Cardiac septum (tissue), 1 donor: ENCODE measurements at regions of chr9 and their contacts with region 1.

Region 1: DNA sequence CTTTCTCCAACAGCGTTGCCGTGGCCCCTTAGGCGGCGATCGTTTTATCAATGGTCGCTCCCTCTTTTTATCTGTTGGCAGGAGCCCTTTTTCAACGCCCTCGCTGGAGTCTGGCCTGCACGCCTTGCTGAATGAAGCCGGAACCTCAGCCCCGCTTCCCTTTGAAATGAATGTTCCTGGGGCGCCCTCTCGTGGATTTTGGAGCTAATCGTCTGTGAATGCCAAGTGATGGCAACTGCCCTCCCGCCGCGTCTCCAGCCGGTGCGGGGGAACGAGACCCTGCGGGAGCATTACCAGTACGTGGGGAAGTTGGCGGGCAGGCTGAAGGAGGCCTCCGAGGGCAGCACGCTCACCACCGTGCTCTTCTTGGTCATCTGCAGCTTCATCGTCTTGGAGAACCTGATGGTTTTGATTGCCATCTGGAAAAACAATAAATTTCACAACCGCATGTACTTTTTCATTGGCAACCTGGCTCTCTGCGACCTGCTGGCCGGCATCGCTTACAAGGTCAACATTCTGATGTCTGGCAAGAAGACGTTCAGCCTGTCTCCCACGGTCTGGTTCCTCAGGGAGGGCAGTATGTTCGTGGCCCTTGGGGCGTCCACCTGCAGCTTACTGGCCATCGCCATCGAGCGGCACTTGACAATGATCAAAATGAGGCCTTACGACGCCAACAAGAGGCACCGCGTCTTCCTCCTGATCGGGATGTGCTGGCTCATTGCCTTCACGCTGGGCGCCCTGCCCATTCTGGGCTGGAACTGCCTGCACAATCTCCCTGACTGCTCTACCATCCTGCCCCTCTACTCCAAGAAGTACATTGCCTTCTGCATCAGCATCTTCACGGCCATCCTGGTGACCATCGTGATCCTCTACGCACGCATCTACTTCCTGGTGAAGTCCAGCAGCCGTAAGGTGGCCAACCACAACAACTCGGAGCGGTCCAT is 10.0 kb downstream of the S1PR3 start:
- DNase-seq: peak; percentile 93

Region 2: DNA sequence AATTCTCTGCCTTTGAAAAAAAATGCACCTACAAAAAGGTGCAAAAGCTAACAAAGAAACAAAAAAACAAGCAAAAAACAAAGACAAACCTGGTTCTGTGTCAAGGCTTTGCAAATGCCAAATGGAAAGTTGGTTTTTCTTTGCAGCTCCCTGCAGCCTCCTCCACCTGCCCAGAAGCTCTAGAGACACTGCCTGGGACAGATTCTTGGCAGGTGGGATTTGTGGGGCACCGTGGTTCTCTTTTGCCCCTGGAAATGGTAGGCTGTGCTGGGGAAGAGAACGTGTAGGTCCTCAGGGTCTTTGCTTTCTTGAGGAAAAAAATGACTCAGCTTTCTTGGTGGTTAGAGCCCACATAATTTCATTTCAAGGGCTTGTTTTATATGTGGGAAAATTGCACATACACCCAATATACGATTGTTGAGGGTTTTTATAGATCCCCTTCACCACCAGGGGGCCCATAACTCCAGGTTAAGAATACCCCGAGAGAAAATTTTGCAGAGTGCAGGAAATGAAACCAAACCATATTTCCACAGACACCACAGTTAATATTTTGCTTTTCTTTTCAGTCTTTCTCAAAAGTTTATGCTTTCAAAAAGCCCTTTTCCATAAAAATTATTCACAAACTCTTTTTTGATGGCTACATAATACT is 407.6 kb before region 1 on chr9:
- intact Hi-C with region 1: loop called (anchors 1 kb)
- DNase-seq: no peak

Region 3: GRCh38 chr9:88722753-88723152 is 278.5 kb before region 1 on chr9:
- intact Hi-C with region 1: loop called (anchors 5 kb)
- DNase-seq: no peak

Region 4: DNA sequence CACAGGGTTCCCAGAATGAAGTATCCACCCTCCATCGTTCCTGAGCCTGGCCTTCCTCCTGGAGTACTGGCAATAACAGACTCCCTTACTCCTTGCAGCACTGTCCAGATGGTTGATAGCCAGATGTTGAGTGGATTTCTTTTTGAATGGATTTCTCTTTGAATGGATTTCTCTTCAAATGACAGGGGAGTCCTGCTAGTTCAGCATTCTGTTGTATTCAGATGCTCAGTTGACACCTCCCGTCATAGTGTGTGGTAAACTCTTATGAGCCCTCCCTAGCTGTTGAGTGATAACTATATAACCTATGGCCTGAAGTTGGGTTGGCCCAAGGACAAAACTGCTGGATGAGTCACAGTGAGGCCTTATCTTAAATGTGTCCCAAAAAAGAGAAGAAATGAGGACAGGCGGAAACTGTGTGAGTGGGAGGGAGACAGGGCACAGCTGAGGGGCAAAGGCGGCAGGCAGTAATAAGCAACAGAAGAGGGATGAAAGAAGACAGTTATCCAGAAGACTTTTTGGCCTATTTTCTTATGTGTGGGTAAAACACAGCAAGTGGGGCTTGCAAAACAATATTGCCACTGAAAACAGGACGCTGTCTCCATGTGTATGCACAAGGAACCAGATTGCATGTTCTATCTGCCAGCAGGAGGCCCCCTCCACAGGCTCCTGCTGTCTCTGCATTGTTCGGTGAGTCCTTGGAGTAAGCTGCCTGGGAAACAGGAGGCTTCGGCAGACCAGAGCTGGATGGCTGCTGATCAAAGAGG is 219.4 kb before region 1 on chr9:
- intact Hi-C with region 1: loop called (anchors 5 kb)
- DNase-seq: no peak